GM10248 (cell line): ENCODE measurements at regions of chr10 and their contacts with region 1.

Region 1: GRCh38 chr10:100373298-100374136 is 26.5 kb downstream of the SCD start:
- DNase-seq: peak; percentile 94
- CTCF ChIP-seq: no peak

Region 2: DNA sequence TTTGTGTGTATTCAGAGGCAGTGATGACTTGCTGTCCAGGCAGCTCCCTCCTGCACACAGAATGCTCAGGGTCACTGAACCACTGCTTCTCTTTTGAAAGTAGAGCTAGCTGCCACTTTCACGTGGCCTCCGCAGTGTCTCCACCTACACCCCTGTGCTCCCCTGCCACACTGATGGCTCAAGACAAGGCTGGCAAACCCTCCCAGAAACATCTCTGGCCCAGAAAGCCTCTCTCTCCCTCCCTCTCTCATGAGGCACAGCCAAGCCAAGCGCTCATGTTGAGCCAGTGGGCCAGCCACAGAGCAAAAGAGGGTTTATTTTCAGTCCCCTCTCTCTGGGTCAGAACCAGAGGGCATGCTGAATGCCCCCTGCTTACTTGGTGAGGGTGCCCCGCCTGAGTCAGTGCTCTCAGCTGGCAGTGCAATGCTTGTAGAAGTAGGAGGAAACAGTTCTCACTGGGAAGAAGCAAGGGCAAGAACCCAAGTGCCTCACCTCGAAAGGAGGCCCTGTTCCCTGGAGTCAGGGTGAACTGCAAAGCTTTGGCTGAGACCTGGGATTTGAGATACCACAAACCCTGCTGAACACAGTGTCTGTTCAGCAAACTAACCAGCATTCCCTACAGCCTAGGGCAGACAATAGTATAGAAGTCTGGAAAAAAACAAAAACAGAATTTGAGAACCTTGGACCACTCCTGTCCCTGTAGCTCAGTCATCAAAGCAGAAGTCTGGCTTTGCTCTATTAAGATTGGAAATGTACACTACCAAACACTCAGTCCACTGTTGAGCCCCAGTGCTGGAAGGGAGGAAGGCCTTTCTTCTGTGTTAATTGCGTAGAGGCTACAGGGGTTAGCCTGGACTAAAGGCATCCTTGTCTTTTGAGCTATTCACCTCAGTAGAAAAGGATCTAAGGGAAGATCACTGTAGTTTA is 10.7 kb before region 1 on chr10:
- CTCF ChIA-PET with region 1: interaction called, 9 read pairs
- POLR2A ChIA-PET with region 1: interaction called, 10 read pairs
- DNase-seq: peak; percentile 0
- CTCF ChIP-seq: no peak